K562 (cell line): ENCODE measurements at regions of chr20 and their contacts with region 1.

Region 1: DNA sequence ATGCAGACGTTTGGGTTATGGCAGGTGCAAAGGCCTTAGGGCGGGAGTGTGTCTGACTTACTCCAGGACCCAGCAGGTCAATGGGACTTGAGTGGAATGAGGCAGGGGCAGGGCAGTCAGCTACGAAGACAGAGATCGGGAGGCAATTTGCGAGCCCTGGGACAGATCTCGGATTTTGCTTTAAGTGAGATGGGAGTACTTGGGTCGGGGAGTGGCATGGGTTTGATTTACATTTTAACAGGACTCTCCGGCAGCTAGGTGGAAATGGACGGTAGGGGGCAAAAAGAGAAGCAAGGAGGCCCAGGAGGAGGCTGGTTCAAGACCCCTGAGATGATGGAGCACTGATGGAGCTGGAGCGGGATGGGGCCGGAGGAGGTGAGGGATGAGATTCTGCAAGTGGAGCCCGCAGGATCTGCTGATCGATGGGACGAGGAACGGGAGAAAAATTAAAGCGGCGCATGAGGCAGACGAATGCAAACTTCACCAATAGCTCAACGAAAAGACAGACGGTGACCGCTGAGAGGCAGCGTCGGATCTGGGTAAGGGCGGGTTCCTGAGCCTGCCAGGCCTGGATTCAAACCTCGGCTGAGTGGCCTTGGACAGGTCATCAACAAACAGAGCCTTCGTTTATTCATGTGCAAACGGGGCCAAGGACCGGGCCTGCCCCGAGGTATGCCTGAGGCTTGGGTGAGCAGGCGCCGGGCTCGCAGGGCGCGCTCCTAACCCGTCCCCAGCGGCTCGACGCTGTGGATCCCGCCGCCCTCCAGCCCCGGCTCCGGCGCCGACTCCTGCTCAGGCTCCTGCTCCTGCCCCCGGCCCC is 756 bp upstream of the RBCK1 start:
- DNase-seq: peak; percentile 80 to 83 (median 82)
- ATAC-seq: peak; percentile 90
- H3K4me3 ChIP-seq: peak overlapping the region; percentile 52
- H3K27ac ChIP-seq: peak overlapping the region; percentile 88
- H3K4me1 ChIP-seq: peaks cover 17 to 18% of the 10 kb centered on the region in 2 experiments; a peak in 4 of 5 replicates
- H3K27me3 ChIP-seq: no peaks in the 10 kb centered on the region
- CTCF ChIP-seq: peak in 2 of 3 experiments; percentile 22 to 55; a peak in 2 of 6 replicates
- EP300 ChIP-seq: no peak; the same call in 1 of the 2 replicates
- POLR2A ChIP-seq: peak; percentile 43; the same call in 1 of the 2 replicates
- RAD21 ChIP-seq: no peak; a peak in 1 of 4 replicates

Region 2: DNA sequence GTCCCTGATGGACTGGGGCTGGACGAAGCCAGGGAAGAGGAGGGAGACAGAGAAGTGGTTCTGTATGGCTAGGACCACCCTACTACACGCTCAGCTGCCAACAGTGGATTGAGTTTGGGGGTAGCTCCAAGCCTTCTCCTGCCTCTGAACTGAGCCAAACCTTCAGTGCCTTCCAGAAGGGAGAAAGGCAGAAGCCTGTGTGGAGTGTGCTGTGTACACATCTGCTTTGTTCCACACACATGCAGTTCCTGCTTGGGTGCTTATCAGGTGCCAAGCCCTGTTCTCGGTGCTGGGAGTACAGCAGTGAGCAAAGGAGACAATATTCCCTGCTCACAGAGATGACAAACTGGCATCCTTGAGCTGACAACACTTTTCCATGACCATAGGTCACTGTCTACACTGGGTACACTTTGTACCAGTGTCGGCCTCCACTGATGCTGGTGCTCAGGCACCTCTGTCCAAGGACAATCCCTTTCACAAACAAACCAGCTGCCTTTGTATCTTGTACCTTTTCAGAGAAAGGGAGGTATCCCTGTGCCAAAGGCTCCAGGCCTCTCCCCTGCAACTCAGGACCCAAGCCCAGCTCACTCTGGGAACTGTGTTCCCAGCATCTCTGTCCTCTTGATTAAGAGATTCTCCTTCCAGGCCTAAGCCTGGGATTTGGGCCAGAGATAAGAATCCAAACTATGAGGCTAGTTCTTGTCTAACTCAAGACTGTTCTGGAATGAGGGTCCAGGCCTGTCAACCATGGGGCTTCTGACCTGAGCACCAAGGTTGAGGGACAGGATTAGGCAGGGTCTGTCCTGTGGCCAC is 10.5 kb before region 1 on chr20:
- CTCF ChIA-PET with region 1: no interaction called
- POLR2A ChIA-PET with region 1: interaction called, 15 read pairs
- in situ Hi-C with region 1: no loop called
- intact Hi-C with region 1: no loop called
- DNase-seq: no peak
- ATAC-seq: peak; percentile 4
- H3K4me3 ChIP-seq: no peak overlapping the region
- H3K27ac ChIP-seq: no peak overlapping the region
- H3K4me1 ChIP-seq: peaks cover 7 to 22% of the 10 kb centered on the region in 2 experiments; a peak in 4 of 5 replicates
- H3K27me3 ChIP-seq: no peaks in the 10 kb centered on the region
- CTCF ChIP-seq: no peak
- EP300 ChIP-seq: no peak
- POLR2A ChIP-seq: no peak
- RAD21 ChIP-seq: no peak